ENCODE measurements at regions of chr6 and their contacts with region 1.

Region 1: GRCh38 chr6:32838114-32838958 is at the start of gene TAP2:
- DNase-seq: peak; percentile 98
- H3K4me3 Mint-ChIP-seq: peak within 1 kb of the TSS; percentile 77
- H3K27ac Mint-ChIP-seq: peak within 1 kb of the TSS; percentile 99
- H3K4me1 Mint-ChIP-seq: peaks cover 80% of the 10 kb centered on the region
- H3K27me3 Mint-ChIP-seq: no peaks in the 10 kb centered on the region
- total RNA-seq, gene TAP2: 203 to 211 TPM

Region 2: DNA sequence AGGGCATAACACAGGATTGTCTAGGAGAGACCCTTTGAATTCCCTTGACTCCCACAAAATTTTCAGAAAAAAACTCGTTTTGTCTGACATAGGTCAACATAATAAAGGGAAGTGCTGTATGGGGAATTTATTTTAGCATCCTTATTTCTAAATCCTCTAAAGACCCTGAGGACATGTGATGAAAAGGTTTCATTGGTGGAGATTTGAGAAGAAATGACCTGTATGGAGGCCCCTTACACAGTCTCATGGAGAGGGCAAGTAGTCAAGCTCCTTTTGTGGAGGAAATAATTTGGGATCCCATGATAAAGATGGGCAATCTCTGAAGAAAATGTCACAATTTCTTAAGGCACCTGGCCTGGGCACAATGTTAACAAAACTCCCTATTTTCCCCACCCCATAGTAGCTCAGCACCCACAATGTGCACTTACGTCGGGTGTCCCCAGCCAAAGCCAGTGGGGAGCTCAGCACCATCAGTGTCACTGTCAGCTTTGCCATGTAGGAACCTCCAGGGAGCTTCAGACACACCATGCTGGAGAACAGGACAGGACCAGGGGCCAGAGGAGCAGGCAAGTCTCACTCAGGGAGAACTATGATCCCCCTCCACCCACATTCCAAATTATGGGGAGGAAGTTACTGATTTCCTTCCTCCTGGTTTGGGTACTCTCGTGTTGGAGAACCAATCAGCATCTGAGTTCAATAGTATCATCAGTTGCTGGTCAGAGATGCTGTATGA is 308.5 kb before region 1 on chr6 and contains the start of gene HLA-DRB5:
- CTCF ChIA-PET with region 1: no interaction called
- POLR2A ChIA-PET with region 1: no interaction called
- DNase-seq: peak; percentile 29
- H3K4me3 Mint-ChIP-seq: peak within 1 kb of the TSS; percentile 80
- H3K27ac Mint-ChIP-seq: peak within 1 kb of the TSS; percentile 49
- H3K4me1 Mint-ChIP-seq: peaks cover 19% of the 10 kb centered on the region
- H3K27me3 Mint-ChIP-seq: peaks cover 4% of the 10 kb centered on the region
- total RNA-seq, gene HLA-DRB5: 12.7 to 14.0 TPM

Region 3: DNA sequence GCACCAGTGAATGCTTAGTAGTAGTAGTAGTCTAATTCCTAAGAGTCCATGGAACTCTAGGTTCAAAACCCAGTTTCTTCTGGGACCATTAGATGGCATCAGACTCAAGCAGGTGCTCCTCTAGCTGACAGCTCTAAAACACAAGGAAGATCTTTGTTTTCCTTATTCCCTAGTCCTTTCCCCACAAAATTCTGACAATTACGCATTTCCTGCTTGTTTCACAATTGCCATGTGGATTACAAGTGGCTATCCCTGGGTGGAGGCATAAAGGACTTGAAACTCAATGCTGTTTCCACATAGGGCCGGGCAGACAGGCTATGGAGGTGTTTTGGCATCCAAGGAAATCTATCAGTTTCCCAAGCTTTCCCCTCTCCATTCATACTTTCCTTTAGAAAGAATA is 12.4 kb before region 1 on chr6:
- CTCF ChIA-PET with region 1: interaction called, 29 read pairs
- POLR2A ChIA-PET with region 1: interaction called, 31 read pairs
- DNase-seq: no peak
- H3K4me3 Mint-ChIP-seq: no peak overlapping the region
- H3K27ac Mint-ChIP-seq: no peak overlapping the region
- H3K4me1 Mint-ChIP-seq: peaks cover 25% of the 10 kb centered on the region
- H3K27me3 Mint-ChIP-seq: no peaks in the 10 kb centered on the region

Region 4: DNA sequence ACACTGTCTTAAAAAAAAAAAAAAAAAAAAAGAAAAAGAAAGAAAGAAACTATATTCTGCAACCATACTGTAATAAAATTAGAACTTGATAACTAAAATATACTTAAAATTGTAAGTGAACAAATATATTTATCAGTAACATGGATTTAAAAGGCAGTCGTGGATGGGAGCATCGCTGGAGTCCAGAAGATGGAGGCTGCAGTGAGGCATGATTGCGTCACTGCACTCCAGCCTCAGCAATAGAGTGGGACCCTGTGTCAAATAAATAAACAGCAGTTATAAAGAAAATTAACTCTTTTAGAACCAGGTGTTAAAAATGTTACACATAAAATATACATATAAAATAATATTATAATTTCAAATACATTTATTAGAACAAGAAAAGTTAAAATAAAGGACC is 24.4 kb after region 1 on chr6:
- CTCF ChIA-PET with region 1: interaction called, 337 read pairs
- POLR2A ChIA-PET with region 1: interaction called, 1,055 read pairs
- DNase-seq: no peak
- H3K4me3 Mint-ChIP-seq: no peak overlapping the region
- H3K27ac Mint-ChIP-seq: no peak overlapping the region
- H3K4me1 Mint-ChIP-seq: peaks cover 54% of the 10 kb centered on the region
- H3K27me3 Mint-ChIP-seq: no peaks in the 10 kb centered on the region

Region 5: DNA sequence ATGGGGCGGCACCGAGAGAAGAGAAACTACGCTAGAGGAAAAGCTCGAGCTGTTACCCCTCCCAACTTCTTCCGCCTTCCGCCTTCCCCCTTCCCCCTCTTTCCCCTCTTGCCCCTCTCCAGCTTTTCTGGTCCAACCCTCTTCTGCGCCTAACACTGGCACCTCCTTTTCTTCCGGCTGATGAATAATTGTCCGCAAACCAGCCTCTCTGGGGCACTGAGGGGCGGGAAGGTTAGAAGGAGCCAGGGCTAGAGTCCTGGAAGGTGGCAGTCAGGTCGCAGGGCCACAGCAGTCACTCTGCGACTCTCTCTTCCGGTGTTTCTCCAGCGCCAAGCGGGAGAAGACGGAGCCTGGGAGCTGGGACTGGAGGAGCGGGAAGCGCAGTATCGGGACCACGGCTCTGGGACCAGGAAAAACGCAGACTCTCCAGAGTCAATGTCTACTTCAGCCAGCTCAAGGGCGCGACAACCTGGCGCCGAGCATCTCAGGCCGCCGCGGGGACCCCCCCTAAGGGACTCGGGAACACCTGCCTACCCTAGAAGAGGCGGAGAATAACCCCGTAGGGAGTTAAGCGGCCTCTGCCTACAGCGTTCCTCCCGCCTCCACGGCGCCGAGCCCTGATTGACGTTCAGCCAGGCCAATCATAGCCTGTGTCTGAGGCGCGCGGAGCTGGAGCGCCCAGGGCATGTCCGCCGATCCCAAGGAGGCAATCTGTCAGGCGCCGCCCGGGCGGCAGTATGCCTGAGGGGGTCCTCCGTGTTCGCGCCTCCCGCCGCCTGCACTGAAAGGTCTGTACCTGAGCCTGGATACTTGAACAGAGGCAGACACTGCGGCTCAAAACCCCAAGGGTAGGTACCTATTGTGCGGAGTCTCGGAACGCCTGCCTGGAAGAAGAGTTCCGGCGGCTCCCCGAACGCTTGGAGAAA is 56.0 kb after region 1 on chr6:
- CTCF ChIA-PET with region 1: interaction called, 10 read pairs
- POLR2A ChIA-PET with region 1: interaction called, 7 read pairs
- DNase-seq: peak; percentile 95
- H3K4me3 Mint-ChIP-seq: peak overlapping the region; percentile 99
- H3K27ac Mint-ChIP-seq: peak overlapping the region; percentile 91
- H3K4me1 Mint-ChIP-seq: peaks cover 40% of the 10 kb centered on the region
- H3K27me3 Mint-ChIP-seq: peaks cover 8% of the 10 kb centered on the region

Region 6: DNA sequence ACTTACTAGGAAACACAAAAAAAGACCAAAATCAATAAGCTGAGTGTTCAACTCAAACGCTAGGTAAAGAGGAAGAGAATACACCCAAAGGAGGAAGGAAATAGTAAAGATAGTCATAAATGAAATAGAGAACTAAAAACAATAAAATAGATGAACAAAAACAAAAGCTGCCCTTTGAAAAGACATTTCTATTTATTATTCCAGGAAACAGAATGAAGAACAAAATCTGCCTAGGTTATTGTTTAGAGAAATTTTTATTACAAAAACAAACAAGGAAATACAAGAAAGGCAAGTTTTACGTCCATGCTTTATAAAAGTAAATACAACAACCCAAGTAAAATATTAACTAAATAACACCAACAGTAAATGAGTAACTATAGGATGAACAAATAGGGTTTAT is 82.4 kb after region 1 on chr6:
- CTCF ChIA-PET with region 1: no interaction called
- POLR2A ChIA-PET with region 1: no interaction called
- DNase-seq: no peak
- H3K4me3 Mint-ChIP-seq: no peak overlapping the region
- H3K27ac Mint-ChIP-seq: no peak overlapping the region
- H3K4me1 Mint-ChIP-seq: peaks cover 8% of the 10 kb centered on the region
- H3K27me3 Mint-ChIP-seq: peaks cover 23% of the 10 kb centered on the region

Region 7: DNA sequence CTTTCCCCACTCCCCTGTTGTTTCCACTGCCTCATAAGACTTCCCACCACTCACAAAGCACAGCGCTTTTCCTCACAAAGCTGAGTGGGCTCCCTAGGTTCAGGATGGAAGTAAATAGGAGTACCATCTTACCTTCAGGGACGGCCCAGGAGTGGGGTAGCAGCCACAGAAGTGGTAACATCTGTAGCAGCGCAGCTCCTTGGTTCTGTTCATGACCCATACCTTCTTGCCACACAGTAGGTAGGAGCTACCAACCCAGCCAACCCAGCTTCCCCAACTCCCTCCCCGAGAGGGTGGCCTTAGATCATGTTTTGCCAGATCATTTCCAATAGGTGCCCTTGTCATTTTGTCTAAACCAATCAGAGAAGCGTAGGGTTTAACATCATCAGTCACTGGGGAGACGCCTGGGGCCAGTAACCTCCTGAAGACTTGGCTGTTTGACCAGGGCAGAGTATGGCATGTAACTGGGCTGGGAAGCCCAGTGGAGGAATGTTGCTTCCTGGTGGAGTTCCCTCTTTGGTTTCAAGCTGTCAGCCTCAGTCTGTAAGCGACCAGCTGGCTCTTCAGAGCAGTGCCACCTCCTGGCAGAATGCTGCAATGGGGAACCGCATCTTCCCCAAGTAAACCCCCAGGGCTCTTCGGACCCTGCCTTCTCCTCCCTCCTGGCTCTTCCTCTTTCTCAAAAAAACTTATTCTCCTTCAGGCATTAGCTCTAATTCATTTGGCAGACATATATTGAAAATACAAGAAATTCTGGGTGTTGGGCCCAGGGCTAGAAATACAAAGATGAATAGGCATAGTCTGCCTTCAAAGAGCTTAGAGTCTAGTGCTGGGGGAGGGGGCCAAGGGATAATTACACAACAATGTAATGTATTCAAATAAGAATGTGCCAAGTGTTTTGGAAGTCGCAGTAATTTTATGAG is 114.7 kb after region 1 on chr6 and contains the start of gene HLA-DMA:
- CTCF ChIA-PET with region 1: interaction called, 37 read pairs
- POLR2A ChIA-PET with region 1: interaction called, 19 read pairs
- DNase-seq: peak; percentile 83
- H3K4me3 Mint-ChIP-seq: peak within 1 kb of the TSS; percentile 81
- H3K27ac Mint-ChIP-seq: peak within 1 kb of the TSS; percentile 67
- H3K4me1 Mint-ChIP-seq: peaks cover 56% of the 10 kb centered on the region
- H3K27me3 Mint-ChIP-seq: no peaks in the 10 kb centered on the region
- total RNA-seq, gene HLA-DMA: 54.0 to 54.3 TPM

Region 8: DNA sequence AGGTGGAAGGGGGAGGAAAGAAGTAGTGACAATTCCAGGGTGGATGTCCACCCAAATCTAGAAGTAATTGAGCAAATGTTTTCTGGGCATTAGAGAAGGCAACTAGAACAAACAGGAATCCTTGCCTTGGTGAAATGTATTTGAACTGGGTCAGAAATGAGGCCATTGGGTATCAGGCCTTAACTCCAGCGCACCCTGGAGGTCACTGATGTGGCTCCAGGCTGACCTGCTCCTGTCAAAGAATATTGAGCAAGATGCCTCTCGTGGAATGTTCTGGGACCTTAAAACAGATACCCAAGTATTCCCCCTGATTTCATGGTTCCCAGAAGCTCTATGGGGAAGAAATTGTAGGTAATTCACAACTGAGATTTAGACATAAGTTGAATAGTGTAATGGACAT is 244.4 kb after region 1 on chr6:
- CTCF ChIA-PET with region 1: no interaction called
- POLR2A ChIA-PET with region 1: no interaction called
- DNase-seq: no peak
- H3K4me3 Mint-ChIP-seq: no peak overlapping the region
- H3K27ac Mint-ChIP-seq: peak overlapping the region; percentile 23
- H3K4me1 Mint-ChIP-seq: peaks cover 38% of the 10 kb centered on the region
- H3K27me3 Mint-ChIP-seq: no peaks in the 10 kb centered on the region